Heart left ventricle (tissue), 16 donors: ENCODE measurements at regions of chr19 and their contacts with region 1.

Region 1: GRCh38 chr19:47745010-47745901 is at the start of gene NOP53:
- DNase-seq: peak; percentile 96 to 98 (median 96)
- ATAC-seq: peak; percentile 72 to 77 (median 76)
- H3K4me3 ChIP-seq: peak within 1 kb of the TSS; percentile 47 to 96 (median 78)
- H3K27ac ChIP-seq: peak within 1 kb of the TSS; percentile 90 to 98 (median 96)
- H3K4me1 ChIP-seq: peaks cover 0 to 51% (median 38%) of the 10 kb centered on the region in 12 donors
- H3K27me3 ChIP-seq: no peaks in the 10 kb centered on the region
- CTCF ChIP-seq: no peak
- POLR2A ChIP-seq: peak in 1 of 2 donors; percentile 72
- total RNA-seq, gene NOP53: 132 to 206 (median 171) TPM

Region 2: GRCh38 chr19:47713046-47714021 is 31.9 kb before region 1 on chr19 and contains the start of gene EHD2:
- intact Hi-C with region 1: loop called in 9 of 10 experiments (anchors 1 to 2 kb)
- DNase-seq: peak; percentile 81 to 91 (median 81)
- ATAC-seq: peak; percentile 86 to 94 (median 94)
- H3K4me3 ChIP-seq: peak within 1 kb of the TSS; percentile 31 to 97 (median 74)
- H3K27ac ChIP-seq: peak within 1 kb of the TSS; percentile 69 to 96 (median 89)
- H3K4me1 ChIP-seq: peaks cover 0 to 46% (median 30%) of the 10 kb centered on the region in 12 donors
- H3K27me3 ChIP-seq: peaks cover 0 to 12% (median 0%) of the 10 kb centered on the region in 9 donors
- CTCF ChIP-seq: peak in 11 of 12 donors; percentile 91 to 99 (median 96)
- POLR2A ChIP-seq: peak in 1 of 2 donors; percentile 86
- total RNA-seq, gene EHD2: 39.9 to 133 (median 45.1) TPM

Region 3: DNA sequence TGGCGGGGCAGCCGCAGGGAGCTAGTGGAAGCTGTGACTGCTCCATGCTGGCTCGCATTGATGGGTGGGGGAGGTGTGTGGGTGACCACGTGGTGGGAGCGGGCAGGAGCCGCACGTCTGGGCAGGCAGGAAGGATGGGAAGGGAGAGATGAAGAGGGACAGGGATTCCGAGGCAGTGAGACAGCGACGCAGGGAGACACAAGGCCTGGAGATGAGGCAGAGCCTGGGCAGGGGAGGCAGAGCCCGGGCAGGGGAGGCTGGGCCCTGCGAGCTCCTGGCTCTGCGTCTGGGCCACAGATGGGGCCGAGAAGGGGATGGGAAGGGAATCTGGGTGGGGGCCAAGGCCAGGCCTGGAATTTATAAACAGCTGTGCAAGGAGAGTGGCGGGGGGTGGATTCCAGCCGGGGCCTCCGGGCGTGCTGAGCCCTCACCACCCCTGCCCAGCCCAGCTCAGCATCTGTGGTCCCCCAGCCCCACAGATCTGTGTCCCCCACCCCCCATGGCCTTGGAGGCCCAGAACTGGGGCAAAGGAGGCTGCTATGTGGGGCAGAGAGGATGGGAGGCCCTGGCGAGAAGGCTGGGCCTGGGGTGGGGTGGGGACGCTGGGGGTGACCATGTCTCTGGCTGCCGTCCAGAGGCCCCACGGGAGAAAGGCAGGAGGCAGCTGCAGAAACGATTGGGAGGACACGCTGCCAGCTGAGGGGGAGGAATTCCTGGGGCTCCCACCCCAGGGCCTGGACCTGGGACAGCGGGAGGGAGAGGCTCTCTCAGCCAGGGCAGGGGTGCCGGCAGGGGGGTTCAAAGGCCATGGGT is 26.0 kb before region 1 on chr19:
- intact Hi-C with region 1: loop called in 2 of 10 experiments (anchors 2 kb)
- DNase-seq: peak; percentile 91 to 94 (median 91)
- ATAC-seq: peak; percentile 68 to 88 (median 84)
- H3K4me3 ChIP-seq: peak overlapping the region in 11 of 12 donors; percentile 3 to 45 (median 30)
- H3K27ac ChIP-seq: peak overlapping the region; percentile 73 to 95 (median 86)
- H3K4me1 ChIP-seq: peaks cover 0 to 95% (median 53%) of the 10 kb centered on the region in 12 donors
- H3K27me3 ChIP-seq: no peaks in the 10 kb centered on the region
- CTCF ChIP-seq: no peak
- POLR2A ChIP-seq: no peak

Region 4: DNA sequence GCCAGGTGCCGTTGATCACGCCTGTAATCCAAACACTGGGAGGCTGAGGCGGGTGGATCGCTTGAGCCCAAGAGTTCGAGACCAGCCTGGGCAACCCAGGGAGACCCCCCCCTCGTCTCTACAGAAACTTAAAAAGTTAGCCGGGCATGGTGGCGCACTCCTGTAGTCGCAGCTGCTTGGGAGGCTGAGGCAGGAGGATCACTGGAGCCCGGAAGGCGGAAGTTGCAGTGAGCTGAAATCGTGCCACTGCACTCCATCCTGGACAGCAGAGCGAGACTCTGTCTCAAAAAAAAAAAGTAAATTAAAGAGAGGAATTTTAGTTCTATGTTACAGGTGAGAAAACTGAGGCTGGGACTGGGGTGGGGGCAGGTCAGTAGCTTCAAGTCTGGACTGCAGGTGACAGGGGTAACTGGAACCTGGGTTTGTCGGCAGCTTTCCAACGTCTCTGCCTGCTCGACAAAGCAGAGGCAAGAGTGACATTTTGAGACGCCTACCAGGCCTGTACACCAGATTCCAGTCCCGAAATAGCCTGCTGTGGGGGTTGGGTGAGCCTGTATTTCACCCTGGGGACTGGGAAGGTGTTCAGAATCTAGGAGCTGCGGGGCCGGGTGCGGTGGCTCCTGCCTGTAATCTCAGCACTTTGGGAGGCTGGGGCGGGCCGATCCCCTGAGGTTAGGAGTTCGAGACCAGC is 34.4 kb after region 1 on chr19:
- intact Hi-C with region 1: loop called in 1 of 10 experiments (anchors 2 kb)
- DNase-seq: peak; percentile 77 to 93 (median 86)
- ATAC-seq: peak; percentile 78 to 84 (median 82)
- H3K4me3 ChIP-seq: peak overlapping the region; percentile 73 to 99 (median 86)
- H3K27ac ChIP-seq: peak overlapping the region; percentile 93 to 100 (median 98)
- H3K4me1 ChIP-seq: peaks cover 0 to 48% (median 42%) of the 10 kb centered on the region in 12 donors
- H3K27me3 ChIP-seq: no peaks in the 10 kb centered on the region
- CTCF ChIP-seq: no peak
- POLR2A ChIP-seq: peak; percentile 70 to 76

Region 5: GRCh38 chr19:48629599-48630295 is 884.5 kb after region 1 on chr19:
- intact Hi-C with region 1: loop called in 1 of 10 experiments (anchors 5 kb)
- DNase-seq: peak in 4 of 5 donors; percentile 42 to 75 (median 72)
- ATAC-seq: peak in 3 of 4 donors; percentile 26 to 36 (median 28)
- H3K4me3 ChIP-seq: peak overlapping the region in 4 of 12 donors; percentile 2 to 31 (median 18)
- H3K27ac ChIP-seq: peak overlapping the region in 11 of 12 donors; percentile 36 to 88 (median 84)
- H3K4me1 ChIP-seq: peaks cover 20 to 58% (median 49%) of the 10 kb centered on the region in 12 donors
- H3K27me3 ChIP-seq: no peaks in the 10 kb centered on the region
- CTCF ChIP-seq: no peak
- POLR2A ChIP-seq: no peak